ENCODE measurements at regions of chr11 and their contacts with region 1.

Region 1: DNA sequence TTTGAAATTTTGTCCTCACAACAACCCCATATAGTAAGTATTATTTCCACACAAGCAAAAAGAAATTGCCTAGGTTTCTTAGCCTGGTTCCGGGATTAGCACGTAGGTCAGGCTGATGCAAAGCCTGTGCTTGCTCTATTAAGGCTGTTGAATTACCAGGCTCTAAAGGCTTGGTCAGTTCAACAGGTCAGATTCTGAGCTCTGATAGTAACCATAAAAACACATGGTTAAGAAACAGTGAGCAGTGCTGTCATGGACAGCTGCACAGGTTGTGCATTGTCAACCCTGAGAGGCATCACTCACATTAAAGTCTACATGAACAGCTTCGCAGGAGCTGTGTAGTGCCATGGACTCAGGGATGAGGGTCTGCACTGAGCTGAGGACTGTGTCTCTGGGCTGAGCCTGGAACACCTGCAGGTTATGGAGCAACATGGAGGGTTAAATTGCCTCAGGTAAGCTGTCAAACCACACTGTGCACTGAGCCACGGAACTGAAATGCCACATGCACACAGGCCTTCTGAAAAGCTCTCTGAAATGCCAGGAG is 98.0 kb downstream of the PIWIL4 start:
- DNase-seq: peak in 1 of 2 experiments; percentile 34
- H3K4me3 ChIP-seq: no peak overlapping the region
- H3K4me3 Mint-ChIP-seq: no peak overlapping the region
- H3K27ac Mint-ChIP-seq: no peak overlapping the region
- H3K4me1 ChIP-seq: peaks cover 30% of the 10 kb centered on the region
- H3K4me1 Mint-ChIP-seq: peaks cover 21% of the 10 kb centered on the region
- H3K27me3 ChIP-seq: no peaks in the 10 kb centered on the region
- H3K27me3 Mint-ChIP-seq: no peaks in the 10 kb centered on the region
- CTCF ChIP-seq: no peak

Region 2: DNA sequence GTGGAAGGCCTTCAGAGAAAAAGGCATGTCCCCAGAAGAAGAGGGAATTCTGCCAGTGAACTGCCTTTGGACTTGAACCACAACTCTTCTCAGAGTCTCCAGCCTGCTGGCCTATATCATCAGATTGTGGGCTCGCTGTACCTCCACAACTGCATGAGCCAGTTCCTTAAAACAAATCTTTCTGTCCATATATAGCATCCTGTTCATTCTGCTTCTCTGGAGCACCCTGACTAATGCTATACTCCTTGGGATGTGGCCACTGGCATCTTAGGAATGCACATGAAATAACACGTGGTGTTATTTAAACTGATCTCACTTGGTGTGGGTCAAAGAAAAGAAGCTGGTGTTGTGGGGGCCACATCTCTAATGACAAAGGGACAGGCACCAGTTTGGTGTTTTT is 756.5 kb before region 1 on chr11:
- CTCF ChIA-PET with region 1: no interaction called
- POLR2A ChIA-PET with region 1: no interaction called
- intact Hi-C with region 1: no loop called
- DNase-seq: no peak
- H3K4me3 ChIP-seq: no peak overlapping the region
- H3K4me3 Mint-ChIP-seq: no peak overlapping the region
- H3K27ac Mint-ChIP-seq: no peak overlapping the region
- H3K4me1 ChIP-seq: peaks cover 8% of the 10 kb centered on the region
- H3K4me1 Mint-ChIP-seq: peaks cover 7% of the 10 kb centered on the region
- H3K27me3 ChIP-seq: no peaks in the 10 kb centered on the region
- H3K27me3 Mint-ChIP-seq: peaks cover 5% of the 10 kb centered on the region
- CTCF ChIP-seq: no peak

Region 3: GRCh38 chr11:94638902-94639373 is 26.2 kb before region 1 on chr11:
- CTCF ChIA-PET with region 1: no interaction called
- POLR2A ChIA-PET with region 1: no interaction called
- intact Hi-C with region 1: loop called (anchors 1 kb)
- DNase-seq: no peak
- H3K4me3 ChIP-seq: no peak overlapping the region
- H3K4me3 Mint-ChIP-seq: no peak overlapping the region
- H3K27ac Mint-ChIP-seq: no peak overlapping the region
- H3K4me1 ChIP-seq: peaks cover 29% of the 10 kb centered on the region
- H3K4me1 Mint-ChIP-seq: peaks cover 26% of the 10 kb centered on the region
- H3K27me3 ChIP-seq: no peaks in the 10 kb centered on the region
- H3K27me3 Mint-ChIP-seq: no peaks in the 10 kb centered on the region
- CTCF ChIP-seq: no peak

Region 4: GRCh38 chr11:94650756-94651155 is 14.4 kb before region 1 on chr11:
- CTCF ChIA-PET with region 1: no interaction called
- POLR2A ChIA-PET with region 1: no interaction called
- intact Hi-C with region 1: loop called (anchors 1 kb)
- DNase-seq: no peak
- H3K4me3 ChIP-seq: no peak overlapping the region
- H3K4me3 Mint-ChIP-seq: no peak overlapping the region
- H3K27ac Mint-ChIP-seq: peak overlapping the region; percentile 4
- H3K4me1 ChIP-seq: peaks cover 17% of the 10 kb centered on the region
- H3K4me1 Mint-ChIP-seq: peaks cover 24% of the 10 kb centered on the region
- H3K27me3 ChIP-seq: no peaks in the 10 kb centered on the region
- H3K27me3 Mint-ChIP-seq: no peaks in the 10 kb centered on the region
- CTCF ChIP-seq: no peak

Measured in Caco-2 (cell line).